Sciatic nerve (tissue), 2 donors: ENCODE measurements at regions of chr1 and their contacts with region 1.

Region 1: GRCh38 chr1:216653031-216653430 is 70.2 kb downstream of the ESRRG start:
- DNase-seq: no peak
- ATAC-seq: no peak

Region 2: DNA sequence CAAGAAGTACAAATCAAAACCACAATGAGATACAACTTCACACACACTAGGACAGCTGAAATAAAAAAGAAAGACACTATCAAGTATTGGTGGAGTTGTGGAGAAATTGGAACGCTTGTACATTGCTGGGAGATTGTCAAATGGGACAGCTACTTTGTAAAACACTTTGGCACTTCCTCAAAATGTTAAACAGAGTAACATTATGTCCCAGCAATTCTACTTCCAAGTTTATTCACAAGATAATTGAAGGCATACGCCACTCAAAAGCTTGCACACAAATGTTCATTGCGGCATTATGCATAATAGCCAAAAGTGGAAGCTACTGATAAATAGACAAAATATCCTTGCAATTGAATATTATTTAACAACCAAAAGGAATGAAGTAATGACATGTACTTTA is 1770.4 kb before region 1 on chr1:
- intact Hi-C with region 1: loop called (anchors 10 kb)
- DNase-seq: no peak
- ATAC-seq: no peak

Region 3: DNA sequence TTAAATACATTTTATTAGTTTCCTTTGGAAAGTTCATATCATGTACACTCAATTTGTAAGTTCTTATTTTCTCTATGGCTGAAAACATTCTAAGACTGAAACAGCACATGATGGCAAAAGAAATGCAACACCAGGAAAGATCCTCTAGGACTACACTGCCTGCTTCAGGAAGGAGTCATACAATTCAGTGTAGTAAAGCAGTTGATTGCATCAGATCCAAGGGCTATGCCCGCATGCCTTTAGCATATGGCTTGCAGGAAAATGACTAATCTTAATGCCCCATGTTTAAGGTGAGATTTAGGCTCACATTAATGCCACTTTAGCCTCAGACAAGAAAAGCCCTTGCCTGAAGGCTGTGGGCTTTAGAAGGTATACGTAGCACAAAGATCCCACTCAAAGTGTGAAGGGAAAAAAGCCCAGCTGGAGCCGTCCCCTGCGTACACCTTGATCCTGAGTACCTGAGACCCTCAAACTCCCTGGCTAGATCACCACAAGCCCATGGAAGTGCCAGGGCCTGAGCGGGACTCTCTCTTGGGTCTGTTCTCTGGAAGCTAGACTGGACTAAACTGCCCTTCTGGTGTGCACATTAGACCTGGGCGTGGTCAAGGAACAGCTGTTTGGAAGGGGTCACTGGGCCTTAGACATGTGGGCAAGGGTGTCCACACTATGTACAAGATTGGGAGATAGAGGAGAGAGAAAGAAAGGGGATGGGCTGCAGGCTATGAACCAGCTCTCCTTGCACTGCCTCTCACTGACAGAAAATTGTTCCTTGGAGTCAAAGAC is 17.3 kb after region 1 on chr1:
- intact Hi-C with region 1: no loop called
- DNase-seq: no peak
- ATAC-seq: no peak